Vagina (tissue), 2 donors: ENCODE measurements at regions of chr3 and their contacts with region 1.

Region 1: GRCh38 chr3:132722164-132723024 is at the start of gene NPHP3:
- DNase-seq: peak; percentile 98 to 99
- H3K4me3 ChIP-seq: peak within 1 kb of the TSS; percentile 91 to 96
- H3K27ac ChIP-seq: peak within 1 kb of the TSS; percentile 97
- H3K4me1 ChIP-seq: peaks cover 34% of the 10 kb centered on the region
- H3K27me3 ChIP-seq: no peaks in the 10 kb centered on the region
- CTCF ChIP-seq: peak in 1 of 3 experiments; percentile 2
- POLR2A ChIP-seq: peak in 1 of 2 donors; percentile 91
- total RNA-seq, gene NPHP3: 49.1 TPM

Region 2: GRCh38 chr3:133573054-133573628 is 850.7 kb after region 1 on chr3:
- intact Hi-C with region 1: loop called (anchors 5 kb)
- DNase-seq: peak; percentile 100
- H3K4me3 ChIP-seq: peak overlapping the region; percentile 73 to 93
- H3K27ac ChIP-seq: peak overlapping the region; percentile 90
- H3K4me1 ChIP-seq: peaks cover 39% of the 10 kb centered on the region
- H3K27me3 ChIP-seq: no peaks in the 10 kb centered on the region
- CTCF ChIP-seq: peak in 1 of 3 experiments; percentile 6
- POLR2A ChIP-seq: peak in 1 of 2 donors; percentile 50